ENCODE measurements at regions of chr19 and their contacts with region 1.

Region 1: DNA sequence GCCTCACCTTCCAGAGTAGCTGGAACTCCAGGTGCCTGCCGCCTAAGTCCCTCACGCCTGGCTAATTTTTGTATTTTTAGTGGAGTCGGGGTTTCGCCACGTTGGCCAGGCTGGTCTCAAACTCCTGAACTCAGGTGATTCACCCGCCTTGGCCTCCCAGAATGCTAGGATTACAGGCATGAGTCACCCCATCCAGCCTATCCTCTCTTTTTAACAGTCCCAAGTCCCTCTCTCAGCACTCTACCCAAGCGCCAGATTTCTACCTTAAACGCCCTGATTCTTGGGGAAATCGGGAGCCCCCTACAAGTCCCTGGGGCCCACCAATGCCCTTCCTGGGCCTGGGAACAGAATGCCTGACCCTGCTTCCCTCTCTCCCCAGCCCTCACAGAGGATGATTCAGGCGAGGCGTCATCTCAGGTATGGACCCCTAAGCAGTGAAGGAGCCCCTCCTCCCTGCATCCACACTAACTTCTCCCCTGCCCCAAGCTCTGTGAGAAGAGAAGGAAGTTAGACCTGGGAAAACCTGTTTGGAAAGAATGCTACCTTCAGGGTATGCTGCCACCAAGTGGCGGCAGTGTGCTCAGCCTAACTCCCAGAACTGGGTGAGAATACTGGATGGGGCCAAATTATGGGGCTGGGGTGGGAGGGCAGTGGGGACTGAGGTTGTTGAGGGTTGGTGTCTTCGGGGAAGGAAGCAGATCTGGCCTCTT is 20.8 kb upstream of the EBI3 start:
- DNase-seq: no peak
- H3K4me3 ChIP-seq: no peak overlapping the region
- H3K27ac ChIP-seq: no peak overlapping the region
- H3K4me1 ChIP-seq: peaks cover 0 to 4% of the 10 kb centered on the region in 2 donors
- H3K27me3 ChIP-seq: no peaks in the 10 kb centered on the region
- CTCF ChIP-seq: peak in 3 of 6 experiments; percentile 5 to 22 (median 11)
- POLR2A ChIP-seq: no peak

Region 2: DNA sequence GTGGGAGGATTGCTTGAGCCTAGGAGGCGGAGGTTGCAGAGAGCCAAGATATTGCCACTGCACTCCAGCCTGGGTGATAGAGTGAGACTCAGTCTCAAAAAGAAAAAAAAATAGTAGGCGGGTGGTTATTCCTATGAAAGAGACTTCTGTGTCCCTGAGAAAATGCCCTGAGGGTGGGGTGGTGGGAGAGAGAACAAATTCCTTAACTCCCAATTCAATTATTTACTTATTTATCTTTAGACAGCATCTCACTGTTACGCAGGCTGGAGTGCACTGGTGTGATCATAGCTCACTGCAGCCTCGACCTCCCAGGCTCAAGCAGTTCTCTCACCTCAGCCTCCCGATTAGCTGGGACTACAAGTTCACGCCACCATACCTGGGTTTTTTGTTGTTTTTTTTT is 212.9 kb before region 1 on chr19:
- intact Hi-C with region 1: loop called in 1 of 2 experiments (anchors 10 kb)
- DNase-seq: no peak
- H3K4me3 ChIP-seq: no peak overlapping the region
- H3K27ac ChIP-seq: no peak overlapping the region
- H3K4me1 ChIP-seq: no peaks in the 10 kb centered on the region
- H3K27me3 ChIP-seq: no peaks in the 10 kb centered on the region
- CTCF ChIP-seq: no peak
- POLR2A ChIP-seq: no peak

Region 3: GRCh38 chr19:4014541-4015491 is 193.7 kb before region 1 on chr19:
- intact Hi-C with region 1: loop called in 1 of 2 experiments (anchors 10 kb)
- DNase-seq: peak; percentile 64 to 89 (median 85)
- H3K4me3 ChIP-seq: peak overlapping the region in 1 of 4 donors; percentile 26
- H3K27ac ChIP-seq: peak overlapping the region; percentile 46 to 89 (median 74)
- H3K4me1 ChIP-seq: peaks cover 47 to 59% of the 10 kb centered on the region in 2 donors
- H3K27me3 ChIP-seq: no peaks in the 10 kb centered on the region
- CTCF ChIP-seq: no peak
- POLR2A ChIP-seq: peak in 1 of 2 donors; percentile 36

Region 4: DNA sequence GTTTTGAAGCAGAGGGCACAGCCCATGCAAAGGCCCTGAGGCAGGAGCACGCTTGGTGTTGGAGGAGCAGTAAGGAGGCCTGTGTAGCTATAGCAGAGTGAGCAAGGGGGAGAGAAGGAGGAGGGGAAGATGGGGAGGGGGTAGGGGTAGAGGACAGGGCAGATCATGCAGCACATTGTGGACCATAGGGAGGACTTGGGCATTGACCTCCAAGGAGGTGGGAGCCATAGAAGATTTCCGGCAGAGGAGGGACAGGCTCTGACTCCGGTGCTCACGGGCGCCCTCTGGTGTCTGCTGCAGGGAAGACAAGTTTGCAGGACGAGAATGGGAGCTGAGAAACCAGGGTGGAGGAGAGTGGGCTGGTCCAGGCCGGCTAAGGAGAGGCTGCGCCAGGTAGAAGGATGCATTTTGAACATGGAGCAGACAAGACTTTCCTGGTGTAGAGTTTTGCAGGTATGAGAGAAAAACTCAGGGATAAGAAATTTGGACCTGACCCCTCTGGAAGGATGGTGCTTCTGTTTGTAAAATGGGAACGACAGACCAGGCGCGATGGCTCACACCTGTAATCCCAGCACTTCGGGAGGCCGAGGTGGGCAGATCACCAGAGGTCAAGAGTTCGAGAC is 68.8 kb before region 1 on chr19:
- intact Hi-C with region 1: loop called in 1 of 2 experiments (anchors 10 kb)
- DNase-seq: peak; percentile 72 to 91 (median 82)
- H3K4me3 ChIP-seq: no peak overlapping the region
- H3K27ac ChIP-seq: no peak overlapping the region
- H3K4me1 ChIP-seq: peaks cover 0 to 6% of the 10 kb centered on the region in 2 donors
- H3K27me3 ChIP-seq: no peaks in the 10 kb centered on the region
- CTCF ChIP-seq: peak; percentile 66 to 82 (median 69)
- POLR2A ChIP-seq: no peak

Region 5: DNA sequence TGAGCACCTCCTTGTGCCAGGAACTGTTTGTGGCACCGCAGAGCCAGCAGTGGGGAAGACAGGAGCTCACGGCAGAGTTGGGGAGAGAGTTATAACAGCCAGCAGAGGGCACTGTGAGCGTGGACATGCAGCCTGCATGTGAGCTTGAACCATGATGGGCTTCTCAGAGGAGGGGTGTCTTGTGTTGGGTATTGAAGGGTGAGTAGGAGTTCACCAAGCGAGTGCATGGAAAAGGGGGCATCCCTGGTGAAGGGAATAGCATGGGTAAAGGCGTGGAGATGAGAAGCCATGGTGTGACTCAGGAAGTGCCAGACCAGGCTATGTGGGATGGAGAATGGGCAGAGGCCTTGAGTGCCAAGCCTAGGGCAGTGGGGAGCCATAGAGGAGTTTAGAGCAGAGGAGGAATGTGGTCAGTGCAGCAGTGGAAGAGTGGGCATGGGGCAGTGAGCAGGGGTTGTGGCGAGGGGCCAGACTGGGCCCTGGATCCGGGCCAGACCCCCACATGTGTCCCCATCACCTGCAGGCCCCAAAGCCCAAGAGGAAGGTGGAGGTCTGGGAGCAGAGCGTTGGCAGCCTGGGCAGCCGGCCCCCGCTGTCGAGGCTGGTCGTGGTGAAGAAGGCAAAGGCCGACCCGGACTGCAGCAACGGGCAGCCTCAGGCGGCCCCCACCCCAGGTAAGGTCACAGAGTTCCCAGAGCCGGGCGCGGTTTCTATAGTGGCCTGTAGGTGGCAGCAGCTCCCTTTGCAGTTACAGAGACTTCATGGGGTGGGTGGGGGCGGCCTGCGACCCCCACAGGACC is 58.8 kb after region 1 on chr19:
- intact Hi-C with region 1: no loop called
- DNase-seq: peak in 5 of 7 donors; percentile 48 to 72 (median 52)
- H3K4me3 ChIP-seq: no peak overlapping the region
- H3K27ac ChIP-seq: no peak overlapping the region
- H3K4me1 ChIP-seq: no peaks in the 10 kb centered on the region
- H3K27me3 ChIP-seq: no peaks in the 10 kb centered on the region
- CTCF ChIP-seq: peak; percentile 62 to 86 (median 76)
- POLR2A ChIP-seq: no peak

Region 6: DNA sequence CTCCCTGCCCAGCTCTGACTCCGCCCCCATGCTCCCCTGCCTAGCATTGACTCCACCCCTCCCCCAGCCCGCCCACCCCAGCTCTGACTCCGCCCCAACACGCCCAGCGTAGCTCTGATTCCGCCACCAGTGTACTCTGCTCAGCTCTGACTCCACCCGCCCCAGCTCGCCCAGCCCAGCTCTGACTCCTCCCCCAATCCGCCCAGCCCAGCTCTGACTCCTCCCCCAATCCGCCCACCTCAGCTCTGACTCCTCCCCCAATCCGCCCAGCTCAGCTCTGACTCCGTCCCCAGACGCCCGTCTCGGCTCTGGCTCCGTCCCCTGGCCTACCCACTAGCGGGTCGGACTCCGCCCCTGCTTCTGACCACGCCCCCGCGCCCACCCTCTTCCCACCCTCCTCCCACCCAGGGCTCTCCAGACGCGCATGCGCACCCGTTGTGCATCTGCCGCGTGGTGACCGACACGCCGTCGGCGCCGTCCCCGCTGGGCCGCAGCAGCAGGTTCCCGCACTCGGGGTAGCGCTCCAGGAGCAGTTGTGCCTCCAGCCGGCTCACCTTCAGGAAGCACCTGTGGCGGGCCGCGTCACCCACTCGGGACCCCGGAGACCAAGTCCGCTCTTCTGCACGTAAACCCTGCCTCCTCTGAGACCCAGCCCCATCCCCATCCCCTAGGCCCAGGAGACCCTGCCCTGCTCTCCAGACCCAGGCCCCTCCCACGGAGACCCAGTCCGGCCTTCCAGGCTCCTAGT is 119.9 kb after region 1 on chr19:
- intact Hi-C with region 1: no loop called
- DNase-seq: peak; percentile 89 to 99 (median 98)
- H3K4me3 ChIP-seq: peak overlapping the region in 2 of 4 donors; percentile 10 to 62
- H3K27ac ChIP-seq: peak overlapping the region in 2 of 5 donors; percentile 51 to 75
- H3K4me1 ChIP-seq: peaks cover 9 to 20% of the 10 kb centered on the region in 2 donors
- H3K27me3 ChIP-seq: no peaks in the 10 kb centered on the region
- CTCF ChIP-seq: peak in 1 of 6 experiments; percentile 11
- POLR2A ChIP-seq: peak in 1 of 2 donors; percentile 26

Measured in adrenal gland (tissue), 19 donors.